ENCODE measurements at regions of chr14 and their contacts with region 1.

Region 1: GRCh38 chr14:51269634-51270033 is 29.6 kb downstream of the TMX1 start:
- DNase-seq: no peak
- ATAC-seq: no peak
- H3K4me3 Mint-ChIP-seq: no peak overlapping the region
- H3K27ac Mint-ChIP-seq: no peak overlapping the region
- H3K4me1 Mint-ChIP-seq: no peaks in the 10 kb centered on the region
- H3K27me3 Mint-ChIP-seq: no peaks in the 10 kb centered on the region
- CTCF ChIP-seq: no peak

Region 2: GRCh38 chr14:51283402-51284085 is 13.9 kb after region 1 on chr14:
- CTCF ChIA-PET with region 1: interaction called, 16 read pairs
- POLR2A ChIA-PET with region 1: interaction called, 3 read pairs
- intact Hi-C with region 1: no loop called
- DNase-seq: no peak
- ATAC-seq: no peak
- H3K4me3 Mint-ChIP-seq: no peak overlapping the region
- H3K27ac Mint-ChIP-seq: no peak overlapping the region
- H3K4me1 Mint-ChIP-seq: no peaks in the 10 kb centered on the region
- H3K27me3 Mint-ChIP-seq: no peaks in the 10 kb centered on the region
- CTCF ChIP-seq: peak; percentile 78

Region 3: GRCh38 chr14:51310505-51310944 is 40.9 kb after region 1 on chr14:
- CTCF ChIA-PET with region 1: no interaction called
- POLR2A ChIA-PET with region 1: no interaction called
- intact Hi-C with region 1: no loop called
- DNase-seq: no peak
- ATAC-seq: no peak
- H3K4me3 Mint-ChIP-seq: no peak overlapping the region
- H3K27ac Mint-ChIP-seq: no peak overlapping the region
- H3K4me1 Mint-ChIP-seq: peaks cover 3% of the 10 kb centered on the region
- H3K27me3 Mint-ChIP-seq: peaks cover 4% of the 10 kb centered on the region
- CTCF ChIP-seq: no peak